Colonic mucosa (tissue), 4 donors: ENCODE measurements at regions of chr10 and their contacts with region 1.

Region 1: DNA sequence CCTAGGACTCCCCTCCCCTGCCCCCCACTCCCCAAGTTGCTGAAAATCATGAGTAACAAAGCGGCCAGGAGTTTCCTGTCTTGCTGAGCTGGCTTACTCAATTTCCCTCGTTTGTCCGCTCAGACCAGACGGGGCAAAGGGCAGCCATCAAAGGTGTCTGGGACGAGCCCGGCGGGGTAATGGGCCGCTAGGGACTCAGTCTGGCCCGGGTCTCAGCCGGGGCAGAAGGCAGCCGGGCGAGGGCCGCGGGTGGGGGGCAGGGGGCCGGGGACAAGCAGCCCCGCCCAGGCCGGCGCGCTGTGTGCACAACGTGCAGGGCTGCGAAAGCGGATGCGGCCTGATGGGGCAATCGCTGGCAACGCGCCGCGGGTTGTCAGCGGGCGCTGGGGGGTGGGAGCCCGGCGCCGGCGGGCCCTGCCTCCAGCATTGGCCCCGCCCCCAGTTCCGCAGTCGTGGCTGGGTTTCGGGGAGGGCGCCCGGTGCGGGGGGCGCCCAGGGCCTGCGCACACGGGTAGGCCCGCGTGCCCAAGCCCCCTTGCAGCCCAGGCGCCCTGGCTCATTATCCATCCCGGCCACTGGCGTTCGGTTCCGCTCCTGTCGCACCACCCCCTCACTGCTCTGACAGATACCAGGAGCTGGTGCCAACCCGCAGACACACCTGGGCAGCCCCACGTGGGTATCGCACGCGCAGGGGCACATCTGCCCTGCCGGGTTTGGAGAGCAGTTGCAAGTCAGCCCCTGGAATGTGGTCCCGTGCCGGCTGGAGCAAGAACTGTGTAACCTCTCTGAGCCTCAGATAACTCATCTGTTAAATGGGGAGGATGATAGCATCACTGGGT is 35.1 kb downstream of the DNAJB12 start:
- DNase-seq: peak; percentile 91
- H3K4me3 ChIP-seq: peak overlapping the region; percentile 30
- H3K27ac ChIP-seq: peak overlapping the region; percentile 81
- H3K4me1 ChIP-seq: peaks cover 33% of the 10 kb centered on the region
- H3K27me3 ChIP-seq: no peaks in the 10 kb centered on the region
- CTCF ChIP-seq: no peak

Region 2: GRCh38 chr10:72273410-72274212 is 46.0 kb before region 1 on chr10 and contains the start of gene DDIT4:
- intact Hi-C with region 1: loop called (anchors 5 kb)
- DNase-seq: peak; percentile 99
- H3K4me3 ChIP-seq: peak within 1 kb of the TSS; percentile 79
- H3K27ac ChIP-seq: peak within 1 kb of the TSS; percentile 97
- H3K4me1 ChIP-seq: peaks cover 28% of the 10 kb centered on the region
- H3K27me3 ChIP-seq: no peaks in the 10 kb centered on the region
- CTCF ChIP-seq: no peak
- total RNA-seq, gene DDIT4: 45.5 to 147 TPM